PC-9 (cell line): ENCODE measurements at regions of chr11 and their contacts with region 1.

Region 1: DNA sequence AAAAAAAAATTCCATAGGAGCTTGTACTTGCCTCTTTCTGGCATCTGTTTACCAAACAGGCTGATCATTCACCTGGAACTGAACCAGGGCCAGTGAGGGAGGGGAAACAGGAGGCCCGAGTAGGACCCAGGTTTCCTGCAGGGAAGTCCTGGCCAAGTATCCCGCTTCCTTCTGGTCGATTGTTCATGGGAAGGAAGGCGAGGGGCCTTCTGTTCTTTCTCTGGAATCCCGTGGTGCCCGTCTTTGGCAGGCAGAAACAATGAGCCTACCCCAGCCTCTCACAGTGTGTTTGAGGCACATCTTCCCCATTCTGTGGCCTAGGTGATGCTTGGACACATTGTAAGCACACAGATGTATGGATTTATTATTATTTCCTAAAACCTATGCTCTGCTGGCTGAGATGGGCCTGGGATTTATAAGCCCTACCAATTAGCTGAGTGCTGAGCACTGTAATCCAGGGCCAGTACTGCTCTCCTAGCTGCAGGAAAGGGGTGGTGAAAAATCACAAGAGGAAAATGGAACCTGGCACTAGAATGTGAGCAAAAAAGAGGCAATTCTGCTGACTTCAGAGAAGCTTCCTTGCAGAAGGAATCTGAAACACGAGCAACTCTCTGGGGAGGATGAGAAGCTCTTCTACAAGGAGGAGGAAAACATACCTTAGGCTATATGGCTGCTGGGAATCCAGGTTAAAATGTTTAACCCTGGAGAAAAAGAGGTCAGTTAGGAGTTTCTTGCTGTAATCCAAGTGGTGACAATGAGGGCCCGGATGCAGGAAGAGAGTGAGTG is 53.5 kb downstream of the PRR5L start:
- DNase-seq: no peak
- H3K4me3 ChIP-seq: no peak overlapping the region
- H3K27ac ChIP-seq: no peak overlapping the region
- H3K4me1 ChIP-seq: no peaks in the 10 kb centered on the region
- H3K27me3 ChIP-seq: no peaks in the 10 kb centered on the region
- CTCF ChIP-seq: no peak

Region 2: DNA sequence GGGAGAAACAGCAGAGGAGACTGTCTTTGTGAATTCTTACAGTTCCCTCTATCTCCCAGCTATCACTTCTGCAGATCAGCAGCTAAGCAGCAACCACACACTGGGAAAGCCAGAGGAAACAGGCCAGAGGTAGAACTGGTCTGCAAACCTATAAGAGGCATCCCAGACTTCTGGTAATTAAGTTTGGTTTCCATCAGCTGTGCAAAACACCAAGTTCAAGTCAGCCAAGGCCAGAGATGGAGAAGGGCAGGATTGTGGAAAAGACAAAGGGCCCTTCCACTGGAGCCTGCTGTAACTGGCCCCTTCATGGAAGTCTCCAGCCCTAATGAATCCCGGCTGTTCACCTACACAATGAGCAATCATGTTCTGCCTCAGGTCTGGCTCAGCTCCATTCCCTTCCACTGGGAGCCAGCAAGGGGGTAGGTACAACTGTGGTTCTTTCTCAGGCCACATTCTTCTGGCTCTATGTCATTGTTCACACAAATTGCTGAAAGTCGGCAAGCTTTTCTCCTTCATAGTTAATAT is 819.5 kb before region 1 on chr11:
- CTCF ChIA-PET with region 1: no interaction called
- POLR2A ChIA-PET with region 1: interaction called, 19 read pairs
- intact Hi-C with region 1: no loop called
- DNase-seq: peak; percentile 69 to 81
- H3K4me3 ChIP-seq: no peak overlapping the region
- H3K27ac ChIP-seq: no peak overlapping the region
- H3K4me1 ChIP-seq: peaks cover 19% of the 10 kb centered on the region
- H3K27me3 ChIP-seq: peaks cover 3% of the 10 kb centered on the region; the same call in 1 of the 2 replicates
- CTCF ChIP-seq: no peak

Region 3: DNA sequence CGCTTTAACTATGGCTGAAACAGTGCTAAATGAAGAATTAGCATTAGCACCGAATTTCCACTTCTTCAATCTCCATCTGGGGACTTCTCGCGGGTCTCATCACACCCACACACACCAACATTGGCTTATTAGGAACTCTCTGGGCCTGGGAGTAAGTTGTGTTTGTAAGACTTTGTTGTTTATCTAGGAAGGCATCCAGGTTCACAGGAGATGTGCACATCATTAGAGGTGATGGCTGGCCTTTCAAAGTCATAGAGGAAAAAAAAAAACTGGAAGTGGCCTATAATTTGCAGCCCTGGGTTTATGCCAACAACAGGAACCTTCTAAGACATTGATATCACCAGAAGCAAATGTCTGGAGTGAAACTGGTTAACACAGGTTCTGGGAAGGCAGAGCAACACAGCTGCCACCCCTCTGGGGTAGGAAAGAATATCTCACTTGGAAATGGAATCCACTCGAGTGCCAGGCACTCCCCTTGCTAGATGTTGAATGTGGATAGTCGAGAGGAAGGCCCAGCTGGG is 76.1 kb after region 1 on chr11:
- CTCF ChIA-PET with region 1: no interaction called
- POLR2A ChIA-PET with region 1: no interaction called
- intact Hi-C with region 1: no loop called
- DNase-seq: no peak
- H3K4me3 ChIP-seq: no peak overlapping the region
- H3K27ac ChIP-seq: no peak overlapping the region
- H3K4me1 ChIP-seq: peaks cover 12% of the 10 kb centered on the region
- H3K27me3 ChIP-seq: no peaks in the 10 kb centered on the region
- CTCF ChIP-seq: no peak